Thyroid gland (tissue), 4 donors: ENCODE measurements at regions of chr6 and their contacts with region 1.

Region 1: GRCh38 chr6:88870717-88871330 is 92.6 kb downstream of the RNGTT start:
- DNase-seq: peak; percentile 12 to 28
- H3K4me3 ChIP-seq: no peak overlapping the region
- H3K27ac ChIP-seq: no peak overlapping the region
- H3K4me1 ChIP-seq: no peaks in the 10 kb centered on the region
- H3K27me3 ChIP-seq: no peaks in the 10 kb centered on the region
- CTCF ChIP-seq: peak in 4 of 6 experiments; percentile 48 to 73 (median 69)
- POLR2A ChIP-seq: no peak

Region 2: DNA sequence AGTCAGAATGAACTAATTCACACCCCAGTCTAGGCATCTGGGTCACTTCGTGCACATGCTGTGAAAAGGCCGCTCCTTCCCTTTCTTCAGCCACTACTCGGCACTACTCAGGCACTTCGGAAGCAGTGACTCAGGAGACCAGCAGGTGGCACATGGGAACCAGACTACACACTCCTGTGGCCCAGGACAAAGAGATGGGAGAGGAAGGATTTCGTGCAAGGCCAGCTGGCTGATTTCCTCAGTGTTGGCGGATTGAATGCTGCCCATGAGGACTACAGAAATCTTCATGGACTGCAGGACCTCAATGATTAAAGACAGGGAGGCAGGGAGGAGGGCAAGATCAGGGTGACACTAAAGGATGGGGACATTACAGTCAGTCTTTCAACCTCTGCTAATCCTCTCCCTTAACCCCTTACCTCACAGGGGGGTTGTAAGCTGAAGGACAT is 941.0 kb before region 1 on chr6:
- intact Hi-C with region 1: loop called (anchors 10 kb)
- DNase-seq: peak; percentile 73 to 81
- H3K4me3 ChIP-seq: no peak overlapping the region
- H3K27ac ChIP-seq: no peak overlapping the region
- H3K4me1 ChIP-seq: no peaks in the 10 kb centered on the region
- H3K27me3 ChIP-seq: no peaks in the 10 kb centered on the region
- CTCF ChIP-seq: peak in 5 of 6 experiments; percentile 53 to 88 (median 82)
- POLR2A ChIP-seq: no peak